ENCODE measurements at regions of chr9 and their contacts with region 1.

Region 1: DNA sequence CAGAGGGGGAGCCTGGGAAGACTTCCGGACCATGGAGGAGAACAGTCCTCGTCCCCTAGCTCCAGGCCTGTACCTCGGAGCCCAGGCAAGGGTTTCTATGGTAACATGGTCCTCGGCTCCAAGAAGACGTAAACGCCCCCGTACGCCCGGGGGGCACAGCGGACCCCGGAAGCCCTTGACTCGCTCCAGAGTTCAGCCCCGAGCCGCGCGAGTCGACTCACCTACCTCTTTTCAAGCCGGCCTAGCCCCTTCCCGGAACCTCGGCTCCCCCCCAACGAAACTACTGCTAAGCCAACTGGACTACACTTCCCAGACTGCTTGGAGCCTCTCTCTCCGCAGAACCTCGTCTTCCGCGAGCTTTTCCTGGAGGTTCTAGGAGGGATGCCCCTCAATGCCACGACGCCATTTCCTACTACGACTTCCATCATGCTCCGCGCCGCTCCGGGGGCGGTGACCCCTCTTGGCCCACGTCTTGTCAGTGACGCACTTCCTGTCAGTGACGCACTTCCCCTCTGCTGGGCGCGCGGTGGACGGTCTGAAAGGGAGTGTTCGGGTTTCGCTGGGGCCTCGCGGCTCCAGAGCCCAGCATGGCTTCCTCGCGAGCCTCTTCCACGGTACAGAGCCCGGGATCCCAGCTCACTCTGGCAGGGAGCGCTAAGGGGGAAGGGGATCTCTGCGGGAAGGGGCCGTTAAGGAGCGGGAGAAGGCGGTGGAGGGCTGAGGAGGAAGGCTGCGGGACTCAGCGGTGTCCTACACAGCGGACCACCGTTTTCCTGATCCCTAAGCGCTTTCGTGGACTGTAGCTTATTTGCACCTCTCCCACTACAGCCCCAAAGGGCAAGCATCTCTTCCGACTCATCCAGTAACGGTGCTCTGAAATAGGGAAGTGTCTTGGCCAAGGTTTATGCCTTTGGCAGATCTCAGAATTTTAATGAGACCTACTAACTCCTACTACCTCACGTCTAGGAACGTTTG is at the starts of genes CDC26 and PRPF4:
- DNase-seq: peak; percentile 99
- H3K4me3 ChIP-seq: peak within 1 kb of the TSS; percentile 69 to 99 (median 82)
- H3K27ac ChIP-seq: peak within 1 kb of the TSS; percentile 98 to 99
- H3K4me1 ChIP-seq: peaks cover 10 to 27% (median 15%) of the 10 kb centered on the region in 4 experiments
- H3K27me3 ChIP-seq: no peaks in the 10 kb centered on the region

Region 2: GRCh38 chr9:113340017-113340699 is 64.7 kb after region 1 on chr9 and contains the start of gene WDR31:
- CTCF ChIA-PET with region 1: interaction called, 7 read pairs
- POLR2A ChIA-PET with region 1: interaction called, 10 read pairs
- DNase-seq: peak; percentile 88 to 90 (median 89)
- H3K4me3 ChIP-seq: peak within 1 kb of the TSS; percentile 80 to 95 (median 87)
- H3K27ac ChIP-seq: peak within 1 kb of the TSS; percentile 61 to 78
- H3K4me1 ChIP-seq: peaks cover 13 to 57% (median 49%) of the 10 kb centered on the region in 4 experiments
- H3K27me3 ChIP-seq: no peaks in the 10 kb centered on the region

Region 3: GRCh38 chr9:113427629-113428028 is 152.2 kb after region 1 on chr9:
- CTCF ChIA-PET with region 1: no interaction called
- POLR2A ChIA-PET with region 1: no interaction called
- DNase-seq: peak in 1 of 3 donors; percentile 41
- H3K4me3 ChIP-seq: no peak overlapping the region
- H3K27ac ChIP-seq: no peak overlapping the region
- H3K4me1 ChIP-seq: peaks cover 4 to 42% (median 25%) of the 10 kb centered on the region in 4 experiments
- H3K27me3 ChIP-seq: no peaks in the 10 kb centered on the region

Measured in common myeloid progenitor, CD34-positive (primary cell).